ENCODE measurements at regions of chr6 and their contacts with region 1.

Region 1: DNA sequence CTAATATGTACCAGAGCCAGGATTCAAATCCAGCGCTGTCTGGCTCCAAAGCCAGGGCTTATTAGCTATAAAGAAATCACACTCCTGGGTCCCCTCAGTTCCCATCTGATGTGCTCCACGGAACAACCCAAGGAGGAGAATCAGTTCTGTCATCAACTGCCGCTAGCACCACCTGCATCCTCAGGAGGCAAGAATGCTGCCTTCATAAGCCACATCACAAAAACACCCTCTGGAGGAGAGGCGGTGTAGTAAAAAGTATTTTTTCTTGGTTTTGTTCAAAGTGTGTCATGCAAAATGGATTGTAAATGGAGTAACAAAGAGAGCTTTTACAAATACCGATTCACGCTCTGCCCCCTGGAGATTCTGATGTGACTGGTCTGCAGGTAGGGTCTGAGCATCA is 57.1 kb downstream of the TNFRSF21 start:
- DNase-seq: no peak
- ATAC-seq: no peak
- H3K4me3 ChIP-seq: no peak overlapping the region
- H3K27ac ChIP-seq: no peak overlapping the region
- H3K4me1 ChIP-seq: peaks cover 25% of the 10 kb centered on the region
- H3K27me3 ChIP-seq: no peaks in the 10 kb centered on the region
- CTCF ChIP-seq: no peak
- EP300 ChIP-seq: no peak
- POLR2A ChIP-seq: no peak
- RAD21 ChIP-seq: no peak

Region 2: DNA sequence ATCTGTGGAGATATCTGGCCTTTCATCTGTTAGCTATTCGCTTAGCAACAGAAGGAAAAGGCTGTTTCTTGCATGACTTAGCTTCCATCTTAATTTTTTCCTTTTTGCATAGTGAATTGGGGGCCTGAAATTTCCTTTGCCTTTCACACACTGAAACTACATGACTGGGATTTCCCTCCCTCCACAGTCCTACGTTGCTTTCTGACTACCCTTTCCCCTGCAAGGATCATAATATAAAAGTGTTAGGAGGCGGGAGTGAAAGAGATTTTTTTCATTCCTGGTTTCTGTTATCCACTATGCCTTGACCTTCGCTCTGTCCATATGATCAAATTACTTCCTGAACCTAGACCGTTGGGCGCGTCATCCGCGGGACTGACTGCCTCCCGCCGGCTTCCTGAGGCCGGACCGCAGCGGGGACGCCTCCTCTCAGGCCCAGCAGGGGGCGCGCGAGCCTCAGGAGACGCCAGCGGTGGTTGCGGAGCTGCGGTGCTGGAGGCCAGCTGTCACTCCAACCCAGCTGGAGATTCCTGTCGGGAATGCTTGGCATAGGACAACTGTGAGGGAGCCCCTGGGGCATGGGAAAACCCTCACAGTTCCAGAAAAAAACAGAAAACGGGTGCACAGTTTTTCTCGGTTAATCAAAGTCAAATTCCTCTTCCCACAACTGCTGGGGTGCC is 403.8 kb before region 1 on chr6:
- CTCF ChIA-PET with region 1: no interaction called
- POLR2A ChIA-PET with region 1: no interaction called
- in situ Hi-C with region 1: no loop called
- intact Hi-C with region 1: loop called (anchors 5 kb)
- DNase-seq: peak; percentile 71
- ATAC-seq: peak; percentile 100
- H3K4me3 ChIP-seq: peak overlapping the region; percentile 3 to 19 (median 6); a peak in 2 of 6 replicates
- H3K27ac ChIP-seq: no peak overlapping the region
- H3K4me1 ChIP-seq: peaks cover 9% of the 10 kb centered on the region
- H3K27me3 ChIP-seq: peaks cover 0 to 10% of the 10 kb centered on the region in 2 experiments; a peak in 1 of 5 replicates
- CTCF ChIP-seq: peak; percentile 100
- EP300 ChIP-seq: no peak
- POLR2A ChIP-seq: no peak
- RAD21 ChIP-seq: peak; percentile 97

Region 3: GRCh38 chr6:47264775-47265184 is 12.1 kb after region 1 on chr6:
- CTCF ChIA-PET with region 1: no interaction called
- POLR2A ChIA-PET with region 1: no interaction called
- in situ Hi-C with region 1: no loop called
- intact Hi-C with region 1: no loop called
- DNase-seq: no peak
- ATAC-seq: no peak
- H3K4me3 ChIP-seq: no peak overlapping the region
- H3K27ac ChIP-seq: no peak overlapping the region
- H3K4me1 ChIP-seq: peaks cover 17% of the 10 kb centered on the region
- H3K27me3 ChIP-seq: no peaks in the 10 kb centered on the region
- CTCF ChIP-seq: no peak
- EP300 ChIP-seq: no peak
- POLR2A ChIP-seq: no peak
- RAD21 ChIP-seq: no peak

Region 4: GRCh38 chr6:47292944-47293343 is 40.3 kb after region 1 on chr6:
- CTCF ChIA-PET with region 1: no interaction called
- POLR2A ChIA-PET with region 1: no interaction called
- in situ Hi-C with region 1: no loop called
- intact Hi-C with region 1: loop called (anchors 5 kb)
- DNase-seq: peak; percentile 24
- ATAC-seq: no peak
- H3K4me3 ChIP-seq: no peak overlapping the region
- H3K27ac ChIP-seq: no peak overlapping the region
- H3K4me1 ChIP-seq: peaks cover 50% of the 10 kb centered on the region
- H3K27me3 ChIP-seq: no peaks in the 10 kb centered on the region
- CTCF ChIP-seq: no peak
- EP300 ChIP-seq: no peak
- POLR2A ChIP-seq: no peak
- RAD21 ChIP-seq: no peak